Left colon (tissue), 2 donors: ENCODE measurements at regions of chr15 and their contacts with region 1.

Region 1: DNA sequence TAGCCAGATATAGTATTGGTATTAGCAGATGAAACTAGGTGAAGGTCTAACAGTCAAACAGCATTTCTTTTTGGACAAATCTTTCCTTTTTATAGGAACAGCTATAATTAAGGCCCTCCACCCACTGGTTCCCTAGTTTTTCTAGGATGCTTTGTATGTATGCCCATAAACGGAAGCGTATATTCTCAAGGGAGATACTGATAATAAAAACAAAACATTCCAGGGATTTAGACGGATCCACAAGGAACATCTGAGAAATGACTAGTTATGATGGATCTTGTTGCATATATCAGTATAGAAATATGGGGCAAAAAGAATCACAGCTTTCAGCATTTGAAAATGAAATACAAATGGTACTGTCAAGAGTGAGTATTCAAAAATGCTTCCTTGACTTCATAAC is 22.5 kb downstream of the LRRC28 start:
- DNase-seq: no peak
- ATAC-seq: no peak

Region 2: DNA sequence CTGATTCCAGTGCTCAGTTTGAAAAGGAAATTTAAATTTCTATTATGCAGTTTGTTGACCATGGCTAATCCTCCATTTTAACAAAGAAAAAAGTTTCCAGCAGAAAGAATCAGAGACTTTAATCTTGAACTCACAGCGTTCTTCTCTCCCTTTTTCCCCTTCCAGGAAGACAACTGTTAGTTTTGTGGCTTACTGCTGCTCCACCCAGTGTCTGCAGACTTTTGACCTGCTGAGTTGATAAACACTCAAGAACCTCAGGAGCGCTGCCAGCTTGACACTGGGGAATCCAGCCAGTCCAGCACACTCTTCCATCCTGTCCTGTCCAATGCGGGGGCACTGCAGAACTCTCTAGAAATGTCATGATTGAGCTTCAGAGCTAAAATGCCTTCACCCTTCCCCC is 112.1 kb after region 1 on chr15:
- intact Hi-C with region 1: no loop called
- DNase-seq: peak; percentile 79 to 81
- ATAC-seq: peak; percentile 99

Region 3: DNA sequence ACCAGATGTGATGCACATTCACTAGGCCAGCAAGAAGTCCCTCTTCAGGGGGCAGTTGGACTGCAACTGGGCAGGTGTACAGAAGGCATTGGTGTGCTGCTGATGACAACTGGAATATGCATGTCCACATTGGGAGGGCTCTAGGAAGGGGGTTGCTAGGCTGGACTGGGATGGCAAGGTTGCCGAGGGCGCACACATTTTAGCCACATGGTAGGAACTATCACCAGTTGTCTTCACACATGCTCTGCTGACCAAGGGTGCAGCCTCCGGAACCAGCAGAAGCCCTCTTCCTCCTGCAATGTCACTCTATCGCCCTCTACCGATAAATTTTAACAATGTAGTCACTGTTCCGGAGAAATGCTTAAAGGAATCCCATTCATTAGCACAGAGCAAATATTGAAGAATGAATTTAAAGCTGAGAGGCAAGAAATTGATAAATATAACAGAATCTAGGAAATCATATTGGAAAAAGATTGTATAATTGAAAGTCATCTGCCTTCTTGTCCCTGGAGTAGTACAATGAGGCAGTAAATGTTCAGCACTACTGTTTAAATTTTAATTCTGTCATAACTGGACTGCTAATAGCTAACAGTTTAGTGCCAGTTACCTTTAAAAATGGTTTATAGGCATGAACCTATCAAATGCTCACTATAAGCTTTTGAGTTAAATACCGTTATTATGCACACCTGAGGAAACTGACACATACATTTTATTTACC is 482.1 kb after region 1 on chr15:
- intact Hi-C with region 1: loop called in 1 of 2 experiments (anchors 5 kb)
- DNase-seq: peak in 1 of 2 donors; percentile 48
- ATAC-seq: peak; percentile 93